Activated naive CD4-positive, alpha-beta T cell treated with anti-CD3 and anti-CD28 coated beads for 36 hours (primary cell): ENCODE measurements at regions of chr11 and their contacts with region 1.

Region 1: GRCh38 chr11:27506200-27507182 is at the start of gene LIN7C:
- DNase-seq: peak; percentile 98
- H3K4me3 Mint-ChIP-seq: peak within 1 kb of the TSS; percentile 96
- H3K27ac Mint-ChIP-seq: peak within 1 kb of the TSS; percentile 95
- H3K4me1 Mint-ChIP-seq: peaks cover 46% of the 10 kb centered on the region
- H3K27me3 Mint-ChIP-seq: no peaks in the 10 kb centered on the region
- total RNA-seq, gene LIN7C: 30.5 to 31.1 TPM

Region 2: DNA sequence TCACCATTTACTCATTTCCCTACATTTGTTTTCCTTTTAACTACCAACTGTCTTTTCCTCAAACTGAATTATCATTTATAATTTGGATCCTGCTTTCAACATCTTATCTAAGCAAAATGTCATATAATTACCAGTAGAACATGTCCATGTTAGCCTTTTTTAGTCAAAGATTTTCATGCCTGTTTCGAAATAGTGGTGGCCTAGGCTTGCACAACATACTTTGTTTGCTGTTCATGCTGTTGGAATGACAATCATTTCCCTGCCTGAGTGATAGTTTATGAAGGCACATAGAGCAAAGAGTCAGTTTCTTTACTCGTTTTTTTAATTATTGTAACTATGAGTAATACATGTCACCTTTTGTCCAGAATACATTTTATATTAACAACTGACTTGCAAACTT is 1318.9 kb before region 1 on chr11:
- CTCF ChIA-PET with region 1: no interaction called
- intact Hi-C with region 1: no loop called
- DNase-seq: no peak
- H3K4me3 Mint-ChIP-seq: no peak overlapping the region
- H3K27ac Mint-ChIP-seq: no peak overlapping the region
- H3K4me1 Mint-ChIP-seq: no peaks in the 10 kb centered on the region
- H3K27me3 Mint-ChIP-seq: no peaks in the 10 kb centered on the region

Region 3: DNA sequence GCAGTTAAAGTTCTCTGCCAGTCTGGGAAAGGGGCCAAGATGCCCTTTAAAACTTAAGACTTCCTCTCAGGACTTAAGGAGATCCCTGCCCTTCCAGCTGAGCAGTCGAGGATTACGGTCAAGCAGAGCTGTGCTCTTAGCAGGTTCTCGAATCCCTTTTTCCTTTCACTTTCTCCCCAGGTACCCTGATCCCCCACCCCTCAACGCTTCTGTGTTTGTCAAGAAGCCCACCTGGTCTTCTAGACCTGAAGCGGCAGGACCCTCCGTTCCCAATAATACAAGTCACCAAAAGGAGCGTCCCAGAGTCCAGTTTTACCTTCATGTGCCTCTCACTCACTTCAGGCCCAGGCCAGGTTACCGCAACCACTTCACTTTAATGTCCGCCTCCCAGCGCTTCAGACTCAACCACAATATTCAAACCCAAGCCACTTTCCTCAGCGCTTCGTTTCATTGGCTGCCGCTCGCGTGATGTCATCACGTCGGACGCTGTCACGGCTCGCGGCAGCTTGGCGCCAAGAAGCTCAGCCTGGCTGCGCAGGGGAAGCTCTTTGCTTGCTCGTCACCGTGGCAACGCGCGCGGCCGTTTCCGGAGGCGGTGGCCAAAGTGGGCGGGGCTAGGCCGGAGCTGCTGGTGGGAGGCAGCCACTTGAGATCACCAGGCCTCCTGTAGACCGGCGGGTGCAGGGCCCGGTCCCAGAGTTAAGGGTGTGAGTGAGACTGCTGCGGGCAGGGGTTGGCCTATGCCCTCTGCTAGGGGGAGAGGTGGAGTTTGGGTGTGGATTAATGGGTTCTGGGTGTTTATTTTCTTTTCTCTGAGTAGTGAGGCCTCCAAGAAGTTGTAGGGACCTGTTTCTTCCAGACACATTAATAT is 601.5 kb after region 1 on chr11 and contains the starts of genes KIF18A and METTL15:
- CTCF ChIA-PET with region 1: no interaction called
- intact Hi-C with region 1: loop called (anchors 1 kb)
- DNase-seq: peak; percentile 99
- H3K4me3 Mint-ChIP-seq: peak within 1 kb of the TSS; percentile 99
- H3K27ac Mint-ChIP-seq: peak within 1 kb of the TSS; percentile 98
- H3K4me1 Mint-ChIP-seq: peaks cover 33% of the 10 kb centered on the region
- H3K27me3 Mint-ChIP-seq: no peaks in the 10 kb centered on the region
- total RNA-seq, gene KIF18A: 34.7 to 36.5 TPM
- total RNA-seq, gene METTL15: 18.0 to 19.8 TPM